Right lobe of liver (tissue), 6 donors: ENCODE measurements at regions of chr5 and their contacts with region 1.

Region 1: GRCh38 chr5:132839426-132840301 is 9.2 kb upstream of the SHROOM1 start:
- DNase-seq: peak in 1 of 3 donors; percentile 76
- ATAC-seq: peak; percentile 54 to 69 (median 57)
- H3K4me3 ChIP-seq: no peak overlapping the region
- H3K27ac ChIP-seq: peak overlapping the region; percentile 94 to 98 (median 95)
- H3K4me1 ChIP-seq: peaks cover 0 to 55% (median 21%) of the 10 kb centered on the region in 4 donors
- H3K27me3 ChIP-seq: no peaks in the 10 kb centered on the region
- CTCF ChIP-seq: no peak
- POLR2A ChIP-seq: peak; percentile 85

Region 2: DNA sequence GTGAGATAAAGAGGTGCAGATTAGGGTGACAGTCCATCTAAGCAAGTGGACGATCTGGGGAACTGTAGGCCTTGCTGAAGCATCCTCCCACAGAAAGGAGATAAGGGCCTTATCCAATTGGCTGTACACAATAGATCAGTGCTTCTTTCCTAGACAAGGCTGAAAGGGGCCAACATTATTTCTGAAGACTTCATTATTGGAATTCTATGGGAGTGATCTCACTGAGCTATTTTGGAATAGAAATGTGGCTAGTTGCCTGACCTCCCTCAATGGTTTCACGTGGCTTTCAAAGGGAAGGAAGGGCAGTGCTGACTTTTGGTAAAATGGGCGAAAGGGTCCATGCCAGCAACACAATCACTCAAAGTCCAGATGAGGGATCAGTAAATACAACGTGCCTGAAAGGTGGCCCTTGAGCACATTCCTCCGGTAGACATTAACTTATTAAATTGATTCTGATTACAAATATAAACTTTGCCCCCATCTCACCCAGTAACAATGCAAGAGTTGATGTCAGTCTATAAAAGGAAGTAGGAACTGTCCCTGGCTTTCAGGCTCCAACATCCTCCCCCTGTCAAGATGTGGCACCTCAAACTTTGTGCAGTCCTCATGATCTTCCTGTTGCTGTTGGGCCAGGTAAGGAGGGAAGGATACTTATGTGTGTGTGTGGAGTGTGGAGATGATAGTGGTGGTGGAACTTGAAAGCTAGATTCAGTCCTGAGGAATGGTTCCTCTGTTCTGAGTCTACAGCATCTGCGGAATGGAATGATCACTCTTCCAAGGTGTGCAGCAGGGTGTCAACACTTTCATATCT is 33.7 kb after region 1 on chr5 and contains the start of gene LEAP2:
- intact Hi-C with region 1: loop called in 1 of 2 experiments (anchors 5 kb)
- DNase-seq: peak; percentile 45 to 87 (median 69)
- ATAC-seq: peak; percentile 60 to 84 (median 72)
- H3K4me3 ChIP-seq: peak within 1 kb of the TSS; percentile 46 to 85 (median 69)
- H3K27ac ChIP-seq: peak within 1 kb of the TSS; percentile 93 to 98 (median 96)
- H3K4me1 ChIP-seq: peaks cover 0 to 48% (median 19%) of the 10 kb centered on the region in 4 donors
- H3K27me3 ChIP-seq: no peaks in the 10 kb centered on the region
- CTCF ChIP-seq: no peak
- POLR2A ChIP-seq: peak; percentile 97
- total RNA-seq, gene LEAP2: 120 to 439 (median 214) TPM